AG04449 (cell line): ENCODE measurements at regions of chr2 and their contacts with region 1.

Region 1: GRCh38 chr2:48532824-48533223 is 2.9 kb downstream of the STON1 start:
- DNase-seq: no peak
- H3K4me3 ChIP-seq: no peak overlapping the region
- CTCF ChIP-seq: no peak

Region 2: GRCh38 chr2:48545244-48545643 is 12.4 kb after region 1 on chr2:
- CTCF ChIA-PET with region 1: interaction called, 10 read pairs
- POLR2A ChIA-PET with region 1: no interaction called
- DNase-seq: no peak
- H3K4me3 ChIP-seq: no peak overlapping the region
- CTCF ChIP-seq: peak; percentile 37